Heart right ventricle (tissue), 16 donors: ENCODE measurements at regions of chr19 and their contacts with region 1.

Region 1: DNA sequence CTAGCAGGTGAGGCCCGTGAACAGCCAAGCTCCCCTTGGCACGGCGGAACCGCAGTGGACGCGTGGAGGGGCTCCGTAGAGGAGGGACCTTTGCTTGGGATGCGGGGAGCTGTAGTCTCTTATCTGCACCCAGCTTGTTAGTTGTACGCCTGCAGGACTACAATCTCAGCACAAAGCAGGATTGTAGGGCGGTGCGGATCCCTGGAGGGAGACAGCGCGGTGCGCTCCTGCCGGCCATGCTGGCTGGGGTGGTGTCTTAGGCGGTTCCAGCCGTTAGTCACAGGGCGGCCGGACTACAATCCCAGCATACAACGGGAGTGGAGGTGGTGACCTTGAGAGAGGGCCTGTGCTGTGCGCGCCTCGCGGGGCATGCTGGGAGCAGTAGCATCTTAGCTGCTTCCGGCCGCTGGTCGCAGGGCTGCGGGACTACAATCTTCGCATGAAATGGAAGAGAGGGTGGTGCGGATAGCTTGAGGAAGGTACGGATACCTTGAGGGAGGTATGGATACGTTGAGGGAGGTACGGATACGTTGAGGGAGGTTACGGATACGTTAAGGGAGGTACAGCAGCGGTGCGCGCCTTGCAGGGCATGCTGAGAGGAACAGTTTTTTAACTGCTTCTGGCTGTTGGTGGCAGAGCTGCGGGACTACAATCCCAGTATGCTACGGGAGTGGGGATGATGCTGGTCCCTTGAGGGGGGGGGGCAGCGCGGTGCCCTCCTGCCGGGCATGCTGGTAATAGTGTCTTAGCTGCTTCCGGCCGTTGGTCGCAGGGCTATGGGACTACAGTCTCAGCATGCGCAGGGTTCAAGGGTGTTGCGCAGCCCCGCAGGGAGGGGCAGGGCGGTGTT is 1419.1 kb downstream of the UQCRFS1 start:
- DNase-seq: peak; percentile 91 to 94
- ATAC-seq: peak; percentile 98 to 99 (median 98)
- H3K4me3 ChIP-seq: peak overlapping the region; percentile 65 to 98 (median 74)
- H3K27ac ChIP-seq: peak overlapping the region; percentile 33 to 93 (median 88)
- H3K4me1 ChIP-seq: peaks cover 0 to 36% (median 28%) of the 10 kb centered on the region in 9 donors
- H3K27me3 ChIP-seq: no peaks in the 10 kb centered on the region
- CTCF ChIP-seq: peak in 1 of 9 donors; percentile 21

Region 2: GRCh38 chr19:27657271-27658051 is 136.4 kb before region 1 on chr19:
- intact Hi-C with region 1: loop called in 1 of 10 experiments (anchors 10 kb)
- DNase-seq: no peak
- ATAC-seq: no peak
- H3K4me3 ChIP-seq: no peak overlapping the region
- H3K27ac ChIP-seq: no peak overlapping the region
- H3K4me1 ChIP-seq: peaks cover 0 to 22% (median 4%) of the 10 kb centered on the region in 9 donors
- H3K27me3 ChIP-seq: no peaks in the 10 kb centered on the region
- CTCF ChIP-seq: no peak

Region 3: GRCh38 chr19:27672309-27673047 is 121.4 kb before region 1 on chr19:
- intact Hi-C with region 1: loop called in 2 of 10 experiments (anchors 10 kb)
- DNase-seq: peak; percentile 22 to 56
- ATAC-seq: peak; percentile 69 to 93 (median 82)
- H3K4me3 ChIP-seq: no peak overlapping the region
- H3K27ac ChIP-seq: peak overlapping the region in 6 of 10 donors; percentile 26 to 82 (median 68)
- H3K4me1 ChIP-seq: peaks cover 0 to 55% (median 26%) of the 10 kb centered on the region in 9 donors
- H3K27me3 ChIP-seq: no peaks in the 10 kb centered on the region
- CTCF ChIP-seq: no peak

Region 4: GRCh38 chr19:27759896-27760295 is 34.0 kb before region 1 on chr19:
- intact Hi-C with region 1: loop called in 1 of 10 experiments (anchors 1 kb)
- DNase-seq: peak in 1 of 2 donors; percentile 14
- ATAC-seq: peak; percentile 66 to 91 (median 84)
- H3K4me3 ChIP-seq: no peak overlapping the region
- H3K27ac ChIP-seq: no peak overlapping the region
- H3K4me1 ChIP-seq: peaks cover 0 to 38% (median 8%) of the 10 kb centered on the region in 9 donors
- H3K27me3 ChIP-seq: no peaks in the 10 kb centered on the region
- CTCF ChIP-seq: no peak

Region 5: DNA sequence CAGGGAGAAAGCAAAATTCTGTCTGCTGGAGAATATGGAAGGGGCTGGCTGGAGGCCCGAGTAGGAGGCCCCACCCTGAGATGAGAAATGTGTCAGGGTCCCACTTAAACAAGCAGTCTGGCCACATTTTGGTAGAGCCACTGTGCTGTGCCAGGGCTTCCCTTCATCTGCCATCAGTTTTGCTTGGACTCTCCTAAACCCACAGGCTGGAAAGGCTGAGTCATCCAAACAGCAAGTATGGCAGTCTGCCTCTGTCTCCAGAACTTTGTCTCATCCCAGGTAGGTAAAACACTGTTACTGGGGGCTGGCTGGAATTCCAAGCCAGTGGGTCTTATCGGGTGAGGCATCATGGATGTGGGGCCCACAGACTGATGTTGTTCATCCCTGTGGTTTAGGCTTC is 28.5 kb after region 1 on chr19:
- intact Hi-C with region 1: no loop called
- DNase-seq: no peak
- ATAC-seq: no peak
- H3K4me3 ChIP-seq: no peak overlapping the region
- H3K27ac ChIP-seq: no peak overlapping the region
- H3K4me1 ChIP-seq: no peaks in the 10 kb centered on the region
- H3K27me3 ChIP-seq: no peaks in the 10 kb centered on the region
- CTCF ChIP-seq: no peak